Posterior cingulate gyrus (tissue), 11 donors: ENCODE measurements at regions of chr5 and their contacts with region 1.

Region 1: GRCh38 chr5:113513384-113514288 is at the start of gene YTHDC2:
- DNase-seq: peak; percentile 69 to 98 (median 82)

Region 2: DNA sequence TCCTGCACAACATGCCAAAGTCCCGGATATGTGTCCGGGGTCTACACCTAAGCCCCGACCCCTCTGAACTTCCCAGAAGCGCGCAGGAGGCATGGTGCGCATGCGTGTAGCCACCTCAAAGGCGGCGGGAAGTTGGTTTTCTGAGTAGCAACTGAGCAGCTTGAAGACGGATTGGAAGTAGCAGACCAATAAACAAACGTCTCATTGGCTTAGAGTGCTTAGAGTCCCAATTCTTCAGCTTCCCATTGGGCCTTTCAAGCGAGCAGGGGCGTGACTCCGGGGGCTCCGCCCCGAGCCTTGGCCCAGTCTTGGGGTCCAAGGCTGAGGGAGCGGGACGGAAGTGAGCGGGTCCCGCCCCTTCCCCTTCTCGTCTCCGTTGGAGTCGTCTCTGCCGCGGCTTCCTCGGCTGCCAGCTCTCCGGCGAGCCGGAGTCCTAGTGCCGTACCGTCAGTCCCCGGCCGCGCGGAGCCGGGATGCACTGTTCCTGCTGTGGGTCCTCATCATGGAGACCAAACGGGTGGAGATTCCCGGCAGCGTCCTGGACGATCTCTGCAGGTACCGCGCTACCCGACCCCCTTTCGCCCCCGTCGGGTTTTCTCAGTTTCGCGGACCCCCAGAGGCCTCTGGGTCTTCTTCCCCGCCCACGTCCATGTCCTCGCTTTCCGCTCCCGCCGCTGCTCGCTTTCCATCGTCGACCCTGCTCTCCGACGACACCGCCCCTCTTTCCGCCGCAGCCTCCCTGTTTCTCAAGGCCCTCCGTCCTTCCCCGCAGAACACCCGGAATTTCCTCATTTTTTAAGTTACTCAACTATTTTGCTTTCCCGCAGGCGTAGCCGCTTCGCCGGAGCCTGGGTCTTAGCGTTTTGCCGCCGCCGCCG is 537.0 kb before region 1 on chr5 and contains the start of gene DCP2:
- intact Hi-C with region 1: loop called (anchors 5 kb)
- DNase-seq: peak; percentile 86 to 99 (median 91)

Region 3: GRCh38 chr5:112995764-112996618 is 517.6 kb before region 1 on chr5:
- intact Hi-C with region 1: loop called (anchors 5 kb)
- DNase-seq: peak in 8 of 10 donors; percentile 40 to 93 (median 76)

Region 4: GRCh38 chr5:113320273-113320780 is 193.3 kb before region 1 on chr5:
- intact Hi-C with region 1: no loop called
- DNase-seq: no peak

Region 5: GRCh38 chr5:113384782-113385285 is 128.8 kb before region 1 on chr5:
- intact Hi-C with region 1: loop called (anchors 2 kb)
- DNase-seq: no peak

Region 6: DNA sequence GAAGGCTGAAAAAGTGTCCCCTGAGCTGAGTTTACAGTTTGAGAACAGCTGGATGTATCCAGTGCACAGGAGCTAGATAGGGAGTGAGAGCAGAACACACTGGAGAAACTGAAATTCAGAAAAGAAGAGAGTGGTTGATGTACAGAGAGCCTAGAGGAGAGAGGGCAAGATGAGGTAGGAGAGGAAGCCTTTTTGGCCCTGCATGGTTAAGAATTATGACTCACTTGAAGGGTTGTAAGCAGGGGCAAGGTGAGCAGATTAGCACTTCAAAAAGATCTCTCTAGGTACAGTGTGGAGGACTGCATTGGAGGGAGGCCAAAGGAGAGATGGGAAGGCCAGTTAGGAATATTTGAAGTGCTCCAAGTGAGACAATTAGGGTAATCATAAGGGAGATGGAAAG is 50.6 kb before region 1 on chr5:
- intact Hi-C with region 1: no loop called
- DNase-seq: no peak

Region 7: DNA sequence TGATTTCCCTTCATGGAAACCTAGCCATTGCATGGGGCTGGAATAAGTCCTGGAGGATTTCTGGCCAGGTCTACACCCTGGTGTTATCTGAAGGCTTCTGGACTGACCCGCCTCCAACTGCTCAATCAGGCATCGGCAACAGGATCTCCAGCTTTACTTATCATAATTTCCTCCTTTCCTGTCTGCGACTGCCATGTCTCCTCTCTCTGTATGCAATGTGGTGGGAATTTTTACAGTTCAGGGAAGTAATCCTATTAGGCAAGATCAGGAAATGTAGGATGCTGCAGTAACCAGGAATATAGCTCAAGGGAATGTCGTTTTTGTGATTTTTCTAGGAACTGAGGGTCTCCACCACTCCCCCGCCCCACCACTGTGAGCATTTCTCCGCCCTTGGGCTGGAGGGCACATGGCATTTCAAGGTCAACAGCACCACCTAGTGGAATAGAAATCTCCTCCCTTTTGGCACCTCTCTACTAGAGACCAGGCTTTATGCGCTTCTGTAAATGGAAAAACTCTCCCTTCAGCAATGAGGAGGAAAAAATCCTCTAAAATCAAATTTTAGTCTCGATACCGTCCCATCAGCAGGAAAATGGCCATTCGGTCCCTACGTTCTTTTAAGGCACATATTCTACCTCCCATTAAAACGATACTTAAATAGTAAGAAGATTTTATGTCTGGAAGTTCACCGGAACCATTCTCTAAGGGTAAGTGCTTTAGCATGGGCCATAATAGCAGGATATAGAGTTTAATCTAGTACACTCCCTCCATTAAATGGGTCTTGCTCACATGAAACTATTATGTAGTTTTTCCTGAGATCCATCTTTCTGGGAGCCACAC is 92.9 kb after region 1 on chr5:
- intact Hi-C with region 1: loop called (anchors 10 kb)
- DNase-seq: peak in 7 of 10 donors; percentile 15 to 83 (median 44)